Posterior vena cava (tissue), 2 donors: ENCODE measurements at regions of chr13 and their contacts with region 1.

Region 1: GRCh38 chr13:26179344-26179743 is 42.8 kb downstream of the RNF6 start:
- DNase-seq: no peak

Region 2: GRCh38 chr13:26168237-26168820 is 11.0 kb before region 1 on chr13:
- intact Hi-C with region 1: loop called in 1 of 2 experiments (anchors 1 kb)
- DNase-seq: no peak

Region 3: GRCh38 chr13:26698392-26699196 is 519.2 kb after region 1 on chr13:
- intact Hi-C with region 1: loop called in 1 of 2 experiments (anchors 5 kb)
- DNase-seq: peak; percentile 96

Region 4: DNA sequence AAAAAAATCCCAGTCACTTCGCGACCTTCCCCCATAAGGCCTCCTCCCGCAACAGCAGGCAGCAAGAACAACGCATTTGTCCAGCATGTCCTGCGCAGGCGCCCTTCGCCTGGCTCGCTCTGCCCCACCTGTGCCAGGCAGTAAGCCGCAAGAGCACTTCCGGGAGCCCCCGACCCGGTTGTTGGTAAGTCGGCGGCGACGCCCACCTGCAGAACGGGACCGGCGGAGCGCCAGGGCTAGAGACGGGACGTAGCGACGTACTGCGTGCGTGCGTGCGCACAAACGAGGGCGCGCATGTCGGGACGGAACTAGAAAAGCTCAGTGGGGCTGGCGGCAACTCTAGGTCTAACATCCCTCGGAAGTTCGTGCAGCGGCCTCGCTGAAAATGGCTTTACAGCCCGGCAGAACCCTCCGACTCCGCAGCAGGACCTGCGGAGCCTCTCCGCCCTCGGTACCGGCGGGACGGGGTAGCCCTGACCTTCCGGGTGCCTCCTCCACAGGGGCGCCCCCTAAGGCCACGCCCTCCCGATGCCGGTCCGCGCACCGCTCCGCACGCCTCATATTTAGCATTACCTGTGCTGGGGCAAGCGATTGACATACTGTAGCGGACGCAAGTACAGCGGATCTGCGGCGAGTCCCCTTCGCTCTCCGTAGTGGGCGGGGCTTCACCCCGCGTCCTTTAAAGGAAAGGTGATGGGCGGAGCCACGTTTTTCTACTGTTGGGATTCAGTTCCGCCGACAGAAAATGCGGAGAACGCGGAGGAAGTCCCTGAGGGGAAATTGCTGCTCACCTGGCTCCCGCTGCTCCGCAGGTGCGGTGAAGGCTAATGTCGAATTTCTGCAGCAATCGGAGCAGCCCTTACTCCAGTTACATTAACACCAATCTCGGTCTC is 1270.8 kb after region 1 on chr13 and contains the start of gene MTIF3:
- intact Hi-C with region 1: loop called in 1 of 2 experiments (anchors 5 kb)
- DNase-seq: peak; percentile 97
- total RNA-seq, gene MTIF3: 32.9 to 39.4 TPM